Transverse colon (tissue), 4 donors: ENCODE measurements at regions of chr12 and their contacts with region 1.

Region 1: DNA sequence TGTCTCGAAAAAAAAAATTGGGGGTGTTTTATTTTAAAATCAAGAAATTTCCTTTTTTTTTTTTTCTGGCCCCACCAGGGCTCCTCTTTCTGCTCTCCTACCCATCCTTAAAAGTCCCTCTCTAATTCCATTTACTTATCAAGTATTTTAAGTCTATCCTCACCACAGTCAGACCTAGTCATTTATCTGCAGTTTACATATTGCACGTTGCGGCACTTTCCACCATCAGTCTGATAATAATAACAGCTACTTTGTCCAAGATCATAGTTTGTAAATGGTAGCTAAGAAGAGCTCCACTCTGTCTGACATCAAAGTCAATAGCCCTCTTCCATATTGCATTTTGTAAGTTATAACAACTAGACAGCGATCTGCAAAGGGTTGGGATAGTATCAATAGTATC is 23.6 kb upstream of the CAND1 start:
- DNase-seq: no peak
- H3K4me3 ChIP-seq: no peak overlapping the region
- H3K27ac ChIP-seq: no peak overlapping the region
- H3K4me1 ChIP-seq: no peaks in the 10 kb centered on the region
- H3K27me3 ChIP-seq: no peaks in the 10 kb centered on the region
- CTCF ChIP-seq: no peak
- EP300 ChIP-seq: no peak
- POLR2A ChIP-seq: no peak

Region 2: DNA sequence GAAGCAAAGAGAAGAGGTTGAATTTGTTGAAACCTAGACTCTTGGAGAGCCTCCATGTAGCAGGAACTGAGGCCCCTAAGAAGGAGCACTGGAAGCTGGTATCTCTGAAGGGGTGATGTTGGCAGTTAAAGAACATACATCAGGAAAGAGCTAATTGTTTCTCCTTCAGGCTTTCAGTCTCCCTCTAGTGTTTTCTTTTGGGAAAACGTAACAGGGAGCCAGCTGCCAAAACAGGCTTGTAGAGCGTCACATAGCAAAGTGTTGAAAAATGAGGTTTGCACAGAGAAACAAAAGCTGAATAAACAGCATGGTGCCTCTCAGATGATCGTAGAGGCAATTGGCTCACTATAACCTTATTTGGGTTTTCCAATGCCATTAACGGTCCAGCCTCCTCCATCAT is 23.3 kb before region 1 on chr12:
- in situ Hi-C with region 1: no loop called
- intact Hi-C with region 1: loop called (anchors 2 kb)
- DNase-seq: no peak
- H3K4me3 ChIP-seq: no peak overlapping the region
- H3K27ac ChIP-seq: no peak overlapping the region
- H3K4me1 ChIP-seq: no peaks in the 10 kb centered on the region
- H3K27me3 ChIP-seq: no peaks in the 10 kb centered on the region
- CTCF ChIP-seq: peak in 2 of 5 experiments; percentile 16 to 27
- EP300 ChIP-seq: no peak
- POLR2A ChIP-seq: no peak